Activated T-helper 1 cell treated with anti-CD3 and anti-CD28 coated beads, Interleukin-12 subunit alpha, Interleukin-12 subunit beta, Interleukin-2, Interleukin-4 antibody, amounts not matched to agents 30 ng/mL and 10 ng/mL and 1 ng/mL, durations not matched to agents 14 hours and 24 hours and 36 hours (primary cell): ENCODE measurements at regions of chr6 and their contacts with region 1.

Region 1: GRCh38 chr6:157962601-157963302 is 18.9 kb upstream of the SYNJ2 start:
- DNase-seq: no peak
- H3K4me3 Mint-ChIP-seq: peak overlapping the region; percentile 69
- H3K27ac Mint-ChIP-seq: peak overlapping the region; percentile 86
- H3K4me1 Mint-ChIP-seq: peaks cover 28% of the 10 kb centered on the region
- H3K27me3 Mint-ChIP-seq: peaks cover 1% of the 10 kb centered on the region

Region 2: DNA sequence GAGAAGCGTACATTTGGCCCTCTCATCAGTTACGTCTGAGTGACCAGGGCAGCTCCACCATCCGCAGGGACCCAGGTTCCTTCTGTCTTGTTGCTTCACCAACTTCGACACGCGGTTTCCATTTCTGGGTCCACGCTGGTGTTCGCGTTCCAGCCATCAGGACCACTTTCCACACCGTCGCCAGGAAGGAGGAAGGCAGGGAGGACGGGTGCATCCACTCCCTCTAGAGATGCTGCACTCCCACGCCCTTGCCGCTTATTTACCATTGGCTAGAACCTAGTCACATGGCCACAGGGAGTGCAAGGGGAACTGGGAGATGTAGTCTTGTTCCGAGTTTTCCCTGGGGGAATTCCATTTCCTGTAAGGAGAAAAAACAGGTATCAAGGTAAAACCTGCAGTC is 172.9 kb before region 1 on chr6:
- intact Hi-C with region 1: no loop called
- DNase-seq: no peak
- H3K4me3 Mint-ChIP-seq: no peak overlapping the region
- H3K27ac Mint-ChIP-seq: no peak overlapping the region
- H3K4me1 Mint-ChIP-seq: peaks cover 12% of the 10 kb centered on the region
- H3K27me3 Mint-ChIP-seq: peaks cover 27% of the 10 kb centered on the region

Region 3: GRCh38 chr6:158047127-158047518 is 84.4 kb after region 1 on chr6:
- intact Hi-C with region 1: loop called (anchors 5 kb)
- DNase-seq: peak; percentile 55
- H3K4me3 Mint-ChIP-seq: peak overlapping the region; percentile 53
- H3K27ac Mint-ChIP-seq: peak overlapping the region; percentile 66
- H3K4me1 Mint-ChIP-seq: peaks cover 38% of the 10 kb centered on the region
- H3K27me3 Mint-ChIP-seq: no peaks in the 10 kb centered on the region